ENCODE measurements at regions of chr2 and their contacts with region 1.

Region 1: DNA sequence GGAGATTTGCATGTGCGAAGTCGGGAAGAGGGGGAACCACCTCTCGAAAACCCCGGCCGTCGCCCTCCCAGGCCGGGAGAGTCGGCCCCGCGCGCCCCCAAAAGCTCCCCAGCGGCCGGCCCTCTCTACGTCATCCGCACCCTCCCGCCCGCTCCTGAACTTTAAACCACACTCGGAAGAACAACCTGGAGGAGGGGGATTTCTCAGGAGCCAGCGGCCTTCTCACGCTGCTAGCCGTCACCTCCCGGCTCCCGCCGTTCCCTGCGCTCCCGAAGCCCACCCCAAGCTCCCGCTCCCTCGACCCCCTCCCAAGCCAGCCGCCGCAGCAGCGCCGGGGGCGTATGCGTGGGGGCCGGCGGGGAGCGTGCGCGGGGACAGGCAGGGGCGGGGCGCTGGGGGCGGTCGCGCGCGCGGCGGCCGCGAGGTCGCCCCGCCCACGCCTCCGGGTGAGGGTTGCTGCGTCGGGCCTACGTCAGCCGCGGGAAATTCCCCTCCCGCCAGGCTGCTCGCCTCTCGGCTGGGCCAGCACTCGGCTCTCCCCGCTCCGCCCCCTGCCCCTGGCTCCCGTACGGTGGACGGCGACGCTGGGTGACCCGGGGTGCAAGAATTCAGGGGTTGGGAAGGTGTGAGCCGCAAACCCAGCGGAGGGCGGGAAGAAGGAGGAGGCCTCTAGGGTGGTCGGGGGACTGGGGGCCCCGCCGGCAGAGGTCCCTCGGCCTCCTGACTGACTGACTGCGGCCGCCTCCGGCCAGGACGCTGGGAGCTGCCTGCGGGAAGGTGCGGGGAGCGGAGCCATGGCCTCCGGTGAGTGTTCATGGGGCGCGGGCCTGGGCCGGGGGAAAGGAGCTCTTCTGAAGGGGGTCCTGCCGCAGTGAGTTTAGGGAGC is at the start of gene REL:
- DNase-seq: peak; percentile 80 to 98 (median 89)
- ATAC-seq: peak; percentile 78
- H3K4me3 ChIP-seq: peak within 1 kb of the TSS; percentile 85 to 99
- H3K4me3 Mint-ChIP-seq: peak within 1 kb of the TSS; percentile 93
- H3K27ac ChIP-seq: peak within 1 kb of the TSS; percentile 97 to 100
- H3K27ac Mint-ChIP-seq: peak within 1 kb of the TSS; percentile 99
- H3K4me1 ChIP-seq: peaks cover 34% of the 10 kb centered on the region
- H3K4me1 Mint-ChIP-seq: peaks cover 30% of the 10 kb centered on the region
- H3K27me3 ChIP-seq: no peaks in the 10 kb centered on the region
- H3K27me3 Mint-ChIP-seq: no peaks in the 10 kb centered on the region
- CTCF ChIP-seq: no peak
- total RNA-seq, gene REL: 202 to 205 TPM

Region 2: GRCh38 chr2:60818272-60818671 is 63.0 kb before region 1 on chr2:
- CTCF ChIA-PET with region 1: interaction called, 6 read pairs
- POLR2A ChIA-PET with region 1: interaction called, 15 read pairs
- intact Hi-C with region 1: loop called (anchors 1 kb)
- DNase-seq: peak in 5 of 9 experiments; percentile 40 to 70 (median 50)
- ATAC-seq: no peak
- H3K4me3 ChIP-seq: no peak overlapping the region
- H3K4me3 Mint-ChIP-seq: no peak overlapping the region
- H3K27ac ChIP-seq: peak overlapping the region in 1 of 2 experiments; percentile 83
- H3K27ac Mint-ChIP-seq: peak overlapping the region; percentile 78
- H3K4me1 ChIP-seq: peaks cover 32% of the 10 kb centered on the region
- H3K4me1 Mint-ChIP-seq: peaks cover 43% of the 10 kb centered on the region
- H3K27me3 ChIP-seq: no peaks in the 10 kb centered on the region
- H3K27me3 Mint-ChIP-seq: peaks cover 5% of the 10 kb centered on the region
- CTCF ChIP-seq: peak; percentile 19

Region 3: GRCh38 chr2:60966507-60967405 is 85.5 kb after region 1 on chr2:
- CTCF ChIA-PET with region 1: interaction called, 3 read pairs
- POLR2A ChIA-PET with region 1: interaction called, 12 read pairs
- intact Hi-C with region 1: loop called in 1 of 2 experiments (anchors 5 kb)
- DNase-seq: peak in 1 of 9 experiments; percentile 27
- ATAC-seq: peak; percentile 42
- H3K4me3 ChIP-seq: peak overlapping the region in 1 of 2 experiments; percentile 3
- H3K4me3 Mint-ChIP-seq: peak overlapping the region; percentile 57
- H3K27ac ChIP-seq: peak overlapping the region in 1 of 2 experiments; percentile 78
- H3K27ac Mint-ChIP-seq: peak overlapping the region; percentile 46
- H3K4me1 ChIP-seq: peaks cover 36% of the 10 kb centered on the region
- H3K4me1 Mint-ChIP-seq: peaks cover 49% of the 10 kb centered on the region
- H3K27me3 ChIP-seq: no peaks in the 10 kb centered on the region
- H3K27me3 Mint-ChIP-seq: no peaks in the 10 kb centered on the region
- CTCF ChIP-seq: no peak

Region 4: DNA sequence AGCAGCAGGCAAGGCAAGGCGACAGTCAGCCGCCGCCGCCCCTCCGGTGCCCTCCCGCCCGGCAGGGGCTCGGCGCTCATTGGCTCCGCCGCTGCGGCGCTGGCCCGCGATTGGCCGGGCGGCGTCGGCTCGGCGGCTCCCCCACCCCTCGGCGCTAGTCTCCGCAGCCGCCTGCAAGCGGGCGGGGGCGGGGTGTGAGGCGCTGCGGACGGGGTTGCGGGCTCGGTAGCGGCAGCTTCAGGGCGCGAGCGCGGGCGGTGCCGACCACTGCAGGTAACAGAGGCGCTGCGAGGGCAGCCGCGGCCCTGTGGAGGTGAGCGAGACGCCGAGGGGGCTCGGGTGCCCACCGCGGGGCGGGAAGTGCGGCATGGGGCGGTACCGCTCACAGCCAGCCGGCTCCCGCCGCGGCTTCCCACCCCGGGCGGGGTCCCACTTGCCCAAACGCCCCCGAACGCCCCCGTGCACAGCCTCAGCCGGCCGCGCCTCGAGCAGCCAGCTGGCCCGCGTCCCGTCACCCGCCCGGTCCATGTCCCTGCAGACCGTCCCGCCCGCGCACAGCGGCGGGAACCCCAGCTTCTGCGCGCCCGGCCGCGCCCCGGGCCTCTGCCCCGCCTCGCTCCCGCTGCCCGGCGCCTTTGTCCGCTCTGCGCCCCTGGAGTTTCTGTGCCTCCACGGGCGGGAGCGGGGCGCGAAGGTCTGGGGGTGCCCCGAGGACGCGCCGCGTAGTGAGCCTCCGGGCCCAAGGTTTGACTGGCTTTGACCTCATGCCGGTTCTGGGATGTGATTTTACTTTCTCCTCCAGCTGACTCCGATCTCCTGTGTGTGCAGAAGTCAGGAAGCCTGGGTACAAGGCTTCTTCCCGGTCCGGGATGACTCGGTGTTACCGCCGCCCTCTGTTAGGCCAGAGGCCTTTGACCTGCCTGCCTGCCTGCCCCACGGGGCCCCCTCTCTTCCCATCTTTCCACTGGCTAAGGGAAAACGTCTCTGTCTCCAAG is 184.7 kb after region 1 on chr2 and contains the start of gene SANBR:
- CTCF ChIA-PET with region 1: no interaction called
- POLR2A ChIA-PET with region 1: no interaction called
- intact Hi-C with region 1: loop called in 1 of 2 experiments (anchors 5 kb)
- DNase-seq: peak; percentile 65 to 92 (median 79)
- ATAC-seq: peak; percentile 97
- H3K4me3 ChIP-seq: peak within 1 kb of the TSS; percentile 50 to 59
- H3K4me3 Mint-ChIP-seq: peak within 1 kb of the TSS; percentile 94
- H3K27ac ChIP-seq: no peak within 1 kb of the TSS
- H3K27ac Mint-ChIP-seq: peak within 1 kb of the TSS; percentile 82
- H3K4me1 ChIP-seq: peaks cover 4% of the 10 kb centered on the region
- H3K4me1 Mint-ChIP-seq: peaks cover 7% of the 10 kb centered on the region
- H3K27me3 ChIP-seq: no peaks in the 10 kb centered on the region
- H3K27me3 Mint-ChIP-seq: no peaks in the 10 kb centered on the region
- CTCF ChIP-seq: no peak
- total RNA-seq, gene SANBR: 0.52 to 0.67 TPM

Region 5: GRCh38 chr2:61538200-61538919 is 657.1 kb after region 1 on chr2 and contains the start of gene XPO1:
- CTCF ChIA-PET with region 1: no interaction called
- POLR2A ChIA-PET with region 1: interaction called, 5 read pairs
- intact Hi-C with region 1: loop called (anchors 1 to 5 kb)
- DNase-seq: peak; percentile 94 to 100 (median 99)
- ATAC-seq: peak; percentile 74
- H3K4me3 ChIP-seq: peak within 1 kb of the TSS; percentile 83 to 92
- H3K4me3 Mint-ChIP-seq: peak within 1 kb of the TSS; percentile 92
- H3K27ac ChIP-seq: peak within 1 kb of the TSS; percentile 100
- H3K27ac Mint-ChIP-seq: peak within 1 kb of the TSS; percentile 99
- H3K4me1 ChIP-seq: peaks cover 23% of the 10 kb centered on the region
- H3K4me1 Mint-ChIP-seq: peaks cover 38% of the 10 kb centered on the region
- H3K27me3 ChIP-seq: no peaks in the 10 kb centered on the region
- H3K27me3 Mint-ChIP-seq: no peaks in the 10 kb centered on the region
- CTCF ChIP-seq: no peak
- total RNA-seq, gene XPO1: 96.6 TPM